Psoas muscle (tissue), 8 donors: ENCODE measurements at regions of chr16 and their contacts with region 1.

Region 1: DNA sequence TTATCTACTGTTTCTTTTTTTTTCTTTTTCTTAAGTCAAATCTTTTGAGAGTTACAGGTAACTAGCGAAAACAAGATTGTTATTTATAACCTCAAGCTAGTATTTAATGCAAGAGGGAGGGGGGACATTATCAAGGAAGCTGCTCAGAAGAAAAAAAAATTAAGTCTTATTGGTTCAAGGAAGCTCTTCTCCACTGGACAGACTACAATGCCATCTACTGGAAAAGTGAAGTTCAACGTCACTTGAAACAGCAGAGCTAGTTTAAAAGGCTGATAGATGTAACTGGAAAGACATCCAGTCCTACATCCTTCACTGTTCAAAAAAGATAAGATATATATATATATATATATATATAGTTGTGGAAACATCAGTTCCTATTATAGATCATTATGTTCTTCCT is 418.0 kb upstream of the PSMD7 start:
- DNase-seq: no peak
- ATAC-seq: peak in 3 of 4 donors; percentile 30 to 72 (median 58)
- H3K4me3 ChIP-seq: no peak overlapping the region
- H3K27ac ChIP-seq: no peak overlapping the region
- H3K4me1 ChIP-seq: no peaks in the 10 kb centered on the region
- H3K27me3 ChIP-seq: no peaks in the 10 kb centered on the region
- CTCF ChIP-seq: peak; percentile 69

Region 2: DNA sequence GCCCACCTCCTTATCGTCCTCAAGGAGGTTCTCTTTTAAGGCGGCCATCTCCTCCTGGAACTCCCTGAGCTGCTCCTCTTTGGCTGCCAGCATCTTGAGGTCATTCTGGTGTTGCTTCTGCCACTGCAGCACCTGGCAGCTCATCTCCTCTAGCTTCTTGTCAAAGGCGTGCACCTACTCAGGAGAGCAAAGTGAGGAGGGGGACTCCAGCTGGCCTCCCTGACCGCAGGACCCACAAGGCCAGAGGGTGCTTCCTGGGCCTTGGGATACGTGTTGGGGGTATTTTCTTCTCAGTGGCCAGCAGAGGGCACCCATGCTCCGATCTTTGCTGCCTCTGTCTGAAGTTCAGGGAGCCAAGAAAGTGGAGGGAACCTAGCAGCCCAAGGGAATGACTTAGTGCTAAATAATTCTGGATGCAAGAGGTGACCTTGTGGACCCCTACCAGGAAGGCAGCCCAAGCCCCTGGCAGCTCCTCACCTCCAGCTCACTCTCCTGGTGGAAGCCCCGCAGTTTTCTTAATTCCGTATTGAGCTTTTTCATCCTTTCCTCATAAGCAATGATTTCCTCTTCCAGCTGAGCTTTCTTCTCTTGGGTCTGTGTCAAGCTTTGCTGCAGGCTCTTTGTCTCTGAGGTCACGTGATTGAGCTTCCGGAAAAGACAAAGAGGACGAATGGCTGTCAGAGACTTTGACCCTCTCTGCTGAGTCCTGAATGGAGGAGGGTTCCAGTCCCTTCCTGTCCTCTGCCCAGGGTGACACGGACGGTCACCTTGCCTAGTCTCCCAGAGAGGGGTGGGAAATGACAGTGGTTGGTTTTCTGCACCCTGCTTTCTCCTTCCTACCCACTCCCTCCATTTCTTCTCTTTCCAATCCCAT is 1753.6 kb before region 1 on chr16:
- intact Hi-C with region 1: loop called in 1 of 2 experiments (anchors 10 kb)
- DNase-seq: peak; percentile 77 to 84
- ATAC-seq: peak; percentile 75 to 88 (median 80)
- H3K4me3 ChIP-seq: no peak overlapping the region
- H3K27ac ChIP-seq: no peak overlapping the region
- H3K4me1 ChIP-seq: no peaks in the 10 kb centered on the region
- H3K27me3 ChIP-seq: no peaks in the 10 kb centered on the region
- CTCF ChIP-seq: peak; percentile 72

Region 3: GRCh38 chr16:72501739-72502593 is 1376.6 kb before region 1 on chr16:
- intact Hi-C with region 1: loop called in 1 of 2 experiments (anchors 5 kb)
- DNase-seq: peak; percentile 42 to 57
- ATAC-seq: peak; percentile 49 to 87 (median 75)
- H3K4me3 ChIP-seq: no peak overlapping the region
- H3K27ac ChIP-seq: no peak overlapping the region
- H3K4me1 ChIP-seq: no peaks in the 10 kb centered on the region
- H3K27me3 ChIP-seq: no peaks in the 10 kb centered on the region
- CTCF ChIP-seq: peak; percentile 76

Region 4: GRCh38 chr16:73565262-73565661 is 313.3 kb before region 1 on chr16:
- intact Hi-C with region 1: loop called in 1 of 2 experiments (anchors 5 kb)
- DNase-seq: no peak
- ATAC-seq: no peak
- H3K4me3 ChIP-seq: no peak overlapping the region
- H3K27ac ChIP-seq: no peak overlapping the region
- H3K4me1 ChIP-seq: no peaks in the 10 kb centered on the region
- H3K27me3 ChIP-seq: peaks cover 0 to 6% (median 5%) of the 10 kb centered on the region in 3 donors
- CTCF ChIP-seq: no peak

Region 5: GRCh38 chr16:73713778-73714495 is 164.7 kb before region 1 on chr16:
- intact Hi-C with region 1: loop called in 1 of 2 experiments (anchors 5 kb)
- DNase-seq: peak in 1 of 2 donors; percentile 18
- ATAC-seq: no peak
- H3K4me3 ChIP-seq: no peak overlapping the region
- H3K27ac ChIP-seq: no peak overlapping the region
- H3K4me1 ChIP-seq: peaks cover 6% of the 10 kb centered on the region
- H3K27me3 ChIP-seq: no peaks in the 10 kb centered on the region
- CTCF ChIP-seq: peak; percentile 56

Region 6: DNA sequence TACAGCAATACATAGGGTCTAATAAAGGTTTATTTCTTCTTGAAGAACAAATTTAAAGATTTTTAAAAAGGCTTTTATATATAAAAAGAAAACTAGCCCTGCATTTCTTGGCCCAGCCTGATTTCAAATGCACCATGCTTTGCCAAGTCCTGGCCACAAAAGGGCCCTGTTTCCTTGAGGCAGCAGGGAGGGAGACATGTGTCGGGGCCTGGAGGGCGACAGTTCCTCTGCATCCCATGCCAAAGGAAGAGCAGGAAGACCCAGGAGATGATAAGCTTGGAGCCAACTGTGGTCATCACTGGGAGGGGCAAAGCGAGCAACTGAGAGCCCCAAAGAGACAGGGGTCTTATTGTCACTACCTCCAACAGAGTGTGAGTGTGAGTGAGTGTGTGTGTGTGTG is 153.5 kb before region 1 on chr16:
- intact Hi-C with region 1: no loop called
- DNase-seq: no peak
- ATAC-seq: no peak
- H3K4me3 ChIP-seq: no peak overlapping the region
- H3K27ac ChIP-seq: no peak overlapping the region
- H3K4me1 ChIP-seq: no peaks in the 10 kb centered on the region
- H3K27me3 ChIP-seq: no peaks in the 10 kb centered on the region
- CTCF ChIP-seq: no peak

Region 7: GRCh38 chr16:75576384-75576811 is 1697.8 kb after region 1 on chr16:
- intact Hi-C with region 1: no loop called
- DNase-seq: no peak
- ATAC-seq: no peak
- H3K4me3 ChIP-seq: no peak overlapping the region
- H3K27ac ChIP-seq: no peak overlapping the region
- H3K4me1 ChIP-seq: peaks cover 1% of the 10 kb centered on the region
- H3K27me3 ChIP-seq: no peaks in the 10 kb centered on the region
- CTCF ChIP-seq: no peak